ENCODE measurements at regions of chr17 and their contacts with region 1.

Region 1: GRCh38 chr17:42819944-42820535 is 4.0 kb downstream of the BECN1 start:
- DNase-seq: peak in 1 of 2 experiments; percentile 77
- H3K4me3 ChIP-seq: no peak overlapping the region
- H3K27ac ChIP-seq: no peak overlapping the region
- H3K4me1 ChIP-seq: no peaks in the 10 kb centered on the region; a peak in 1 of 7 replicates
- H3K27me3 ChIP-seq: no peaks in the 10 kb centered on the region
- CTCF ChIP-seq: peak; percentile 76 to 83 (median 78)
- EP300 ChIP-seq: no peak
- POLR2A ChIP-seq: no peak
- RAD21 ChIP-seq: peak; percentile 33 to 59

Region 2: GRCh38 chr17:42642336-42642735 is 177.7 kb before region 1 on chr17:
- CTCF ChIA-PET with region 1: no interaction called
- POLR2A ChIA-PET with region 1: no interaction called
- DNase-seq: no peak
- H3K4me3 ChIP-seq: no peak overlapping the region
- H3K27ac ChIP-seq: no peak overlapping the region
- H3K4me1 ChIP-seq: peaks cover 0 to 2% (median 0%) of the 10 kb centered on the region in 4 experiments; a peak in 1 of 7 replicates
- H3K27me3 ChIP-seq: no peaks in the 10 kb centered on the region; a peak in 1 of 7 replicates
- CTCF ChIP-seq: no peak
- EP300 ChIP-seq: no peak
- POLR2A ChIP-seq: no peak
- RAD21 ChIP-seq: no peak

Region 3: DNA sequence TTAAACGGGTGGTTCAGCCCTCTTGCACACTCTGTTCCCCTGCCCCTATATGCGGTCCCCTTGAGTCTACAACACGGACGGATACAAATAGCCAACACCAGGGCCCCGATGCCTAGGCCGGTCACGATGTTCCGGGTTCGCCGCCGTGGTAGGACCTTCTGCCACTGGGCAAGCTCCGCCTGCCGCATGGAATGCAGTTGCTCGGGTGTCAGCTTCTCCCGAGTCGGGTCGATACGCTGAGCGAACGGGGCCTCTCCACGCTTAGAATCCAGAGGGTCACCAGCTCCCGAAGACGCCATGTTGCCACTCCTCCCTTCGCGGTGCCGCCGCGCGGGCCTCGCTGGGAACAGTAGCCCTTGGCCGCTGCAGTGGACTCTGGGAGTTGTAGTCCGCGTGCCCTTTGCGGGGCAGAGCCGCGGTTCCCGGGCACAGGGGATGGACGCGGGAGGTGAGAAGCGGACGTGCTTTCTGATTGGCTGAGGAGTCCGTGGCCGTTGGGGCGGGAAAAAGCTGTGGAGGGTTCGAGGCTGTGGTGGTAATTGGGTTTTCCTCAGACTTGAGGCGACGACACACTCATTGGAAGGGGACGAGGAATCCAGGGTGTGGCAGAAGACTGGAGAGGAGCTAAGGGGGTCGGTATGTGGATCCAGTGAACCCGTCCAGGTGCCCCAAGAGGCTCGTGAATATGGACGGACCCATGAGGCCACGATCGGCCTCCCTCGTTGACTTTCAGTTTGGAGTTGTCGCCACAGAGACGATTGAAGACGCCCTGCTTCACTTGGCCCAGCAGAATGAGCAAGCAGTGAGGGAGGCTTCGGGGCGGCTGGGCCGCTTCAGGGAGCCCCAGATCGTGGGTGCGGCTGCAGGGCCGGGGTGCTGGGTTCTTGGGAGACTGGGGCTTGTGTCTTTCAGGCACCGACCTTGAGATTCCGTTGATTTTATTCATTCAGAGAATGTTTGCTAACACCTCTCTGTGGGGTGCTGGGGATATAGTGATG is 21.4 kb before region 1 on chr17 and contains the starts of genes CNTD1 and COA3:
- CTCF ChIA-PET with region 1: interaction called, 15 read pairs
- POLR2A ChIA-PET with region 1: interaction called, 7 read pairs
- DNase-seq: peak; percentile 56 to 93
- H3K4me3 ChIP-seq: peak within 1 kb of the TSS; percentile 90 to 100 (median 98)
- H3K27ac ChIP-seq: peak within 1 kb of the TSS; percentile 67
- H3K4me1 ChIP-seq: peaks cover 3 to 5% (median 4%) of the 10 kb centered on the region in 4 experiments; a peak in 6 of 7 replicates
- H3K27me3 ChIP-seq: peaks cover 0 to 15% (median 11%) of the 10 kb centered on the region in 4 experiments; a peak in 6 of 7 replicates
- CTCF ChIP-seq: no peak
- EP300 ChIP-seq: no peak
- POLR2A ChIP-seq: peak in 1 of 2 experiments; percentile 74; a peak in 2 of 3 replicates
- RAD21 ChIP-seq: no peak
- total RNA-seq, gene CNTD1: not detected in 2 replicates
- total RNA-seq, gene COA3: 68.4 and 71.2 TPM in 2 replicates

Region 4: GRCh38 chr17:42809250-42809649 is 10.8 kb before region 1 on chr17:
- CTCF ChIA-PET with region 1: interaction called, 24 read pairs
- POLR2A ChIA-PET with region 1: interaction called, 6 read pairs
- DNase-seq: no peak
- H3K4me3 ChIP-seq: no peak overlapping the region
- H3K27ac ChIP-seq: no peak overlapping the region
- H3K4me1 ChIP-seq: no peaks in the 10 kb centered on the region
- H3K27me3 ChIP-seq: peaks cover 0 to 1% (median 0%) of the 10 kb centered on the region in 4 experiments; a peak in 1 of 7 replicates
- CTCF ChIP-seq: no peak
- EP300 ChIP-seq: no peak
- POLR2A ChIP-seq: no peak
- RAD21 ChIP-seq: no peak

Region 5: DNA sequence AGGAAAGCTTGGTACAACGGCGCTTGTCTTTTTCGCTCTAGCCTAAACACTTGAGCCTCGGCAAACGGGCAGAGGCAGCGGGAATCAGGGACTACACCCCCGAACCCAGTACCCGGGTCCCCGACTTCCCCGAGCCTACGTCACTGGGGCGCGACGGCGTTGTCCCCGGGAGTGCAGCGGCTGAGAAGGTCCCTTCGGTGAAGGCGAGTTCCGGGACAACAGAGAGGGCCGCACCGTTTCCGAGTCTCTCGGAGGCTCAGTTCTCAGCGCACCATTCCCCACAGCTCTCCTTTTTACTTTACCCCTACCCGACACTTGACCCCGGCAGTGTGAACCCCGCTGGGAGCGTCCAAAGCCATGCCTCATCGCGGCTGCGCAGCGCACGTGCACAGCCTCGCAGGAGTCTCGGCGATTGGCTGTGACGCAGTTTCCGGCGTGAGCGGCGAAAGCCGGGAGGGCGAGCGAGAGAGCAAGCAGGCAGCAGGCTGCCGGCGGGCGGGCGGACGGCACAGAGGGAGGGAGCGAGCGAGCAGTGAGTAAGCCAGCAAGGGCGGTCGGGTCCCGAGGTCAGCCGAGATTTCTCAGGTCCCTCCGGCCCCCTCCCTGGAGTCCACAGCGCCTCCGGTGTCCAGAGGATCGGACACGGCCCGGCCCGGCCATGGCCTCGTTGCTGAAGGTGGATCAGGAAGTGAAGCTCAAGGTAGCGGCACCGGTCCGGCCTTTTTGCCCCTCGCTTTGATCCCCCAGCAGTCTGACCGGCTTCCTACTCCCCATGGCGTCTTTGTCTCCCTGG is 13.1 kb after region 1 on chr17 and contains the start of gene PSME3:
- CTCF ChIA-PET with region 1: interaction called, 45 read pairs
- POLR2A ChIA-PET with region 1: interaction called, 69 read pairs
- DNase-seq: peak; percentile 54 to 96
- H3K4me3 ChIP-seq: peak within 1 kb of the TSS; percentile 75 to 99 (median 96)
- H3K27ac ChIP-seq: peak within 1 kb of the TSS; percentile 99
- H3K4me1 ChIP-seq: peaks cover 0 to 2% (median 0%) of the 10 kb centered on the region in 4 experiments; a peak in 2 of 7 replicates
- H3K27me3 ChIP-seq: no peaks in the 10 kb centered on the region
- CTCF ChIP-seq: no peak
- EP300 ChIP-seq: no peak
- POLR2A ChIP-seq: peak; percentile 87 to 94
- RAD21 ChIP-seq: no peak; a peak in 1 of 4 replicates
- total RNA-seq, gene PSME3: 223 and 224 TPM in 2 replicates

Region 6: DNA sequence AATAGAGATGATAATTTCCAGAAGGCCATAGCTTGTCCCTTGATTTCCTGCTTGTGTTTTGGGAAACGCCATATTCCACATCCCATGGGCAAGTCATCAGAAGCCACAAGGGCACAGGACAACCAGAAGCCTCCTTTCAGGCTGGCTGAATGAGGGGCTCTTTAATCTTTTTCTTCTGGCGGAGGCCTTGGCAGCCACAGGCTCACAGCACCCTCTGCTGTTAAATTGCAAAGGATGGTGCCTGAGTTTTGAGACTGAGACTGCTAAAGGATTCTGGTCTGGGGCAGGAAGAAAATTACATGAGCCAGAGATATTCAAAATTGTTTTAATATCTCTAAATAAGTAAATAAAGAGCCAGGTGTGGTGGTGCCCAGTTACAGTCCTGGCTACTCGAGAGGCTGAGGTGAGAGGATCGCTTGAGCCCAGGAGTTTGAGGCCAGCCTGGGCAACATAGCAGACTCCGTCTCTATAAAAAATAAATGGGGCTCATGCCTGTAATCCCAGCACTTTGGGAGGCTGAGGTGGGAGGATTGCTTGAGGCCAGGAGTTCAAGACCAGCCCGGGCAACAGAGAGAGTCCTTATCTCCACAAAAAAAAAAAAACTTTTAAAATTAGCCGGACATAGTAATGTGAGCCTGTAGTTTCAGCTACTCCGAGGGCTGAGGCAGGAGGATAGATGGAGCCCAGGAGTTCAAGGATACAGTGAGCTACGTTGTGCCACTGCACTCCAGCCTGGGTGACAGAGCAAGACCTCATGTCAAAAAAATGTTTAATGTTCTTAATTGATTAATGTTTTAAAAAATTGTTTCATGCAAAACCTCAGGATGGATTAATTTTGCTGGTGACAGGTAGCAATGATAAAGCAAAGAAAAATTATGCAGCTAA is 117.9 kb after region 1 on chr17:
- CTCF ChIA-PET with region 1: interaction called, 14 read pairs
- POLR2A ChIA-PET with region 1: interaction called, 3 read pairs
- DNase-seq: peak; percentile 25 to 55
- H3K4me3 ChIP-seq: no peak overlapping the region
- H3K27ac ChIP-seq: no peak overlapping the region
- H3K4me1 ChIP-seq: no peaks in the 10 kb centered on the region
- H3K27me3 ChIP-seq: no peaks in the 10 kb centered on the region
- CTCF ChIP-seq: peak; percentile 47 to 87 (median 85)
- EP300 ChIP-seq: no peak
- POLR2A ChIP-seq: no peak
- RAD21 ChIP-seq: peak; percentile 96

Measured in H1 (cell line).